ENCODE measurements at regions of chr13 and their contacts with region 1.

Region 1: DNA sequence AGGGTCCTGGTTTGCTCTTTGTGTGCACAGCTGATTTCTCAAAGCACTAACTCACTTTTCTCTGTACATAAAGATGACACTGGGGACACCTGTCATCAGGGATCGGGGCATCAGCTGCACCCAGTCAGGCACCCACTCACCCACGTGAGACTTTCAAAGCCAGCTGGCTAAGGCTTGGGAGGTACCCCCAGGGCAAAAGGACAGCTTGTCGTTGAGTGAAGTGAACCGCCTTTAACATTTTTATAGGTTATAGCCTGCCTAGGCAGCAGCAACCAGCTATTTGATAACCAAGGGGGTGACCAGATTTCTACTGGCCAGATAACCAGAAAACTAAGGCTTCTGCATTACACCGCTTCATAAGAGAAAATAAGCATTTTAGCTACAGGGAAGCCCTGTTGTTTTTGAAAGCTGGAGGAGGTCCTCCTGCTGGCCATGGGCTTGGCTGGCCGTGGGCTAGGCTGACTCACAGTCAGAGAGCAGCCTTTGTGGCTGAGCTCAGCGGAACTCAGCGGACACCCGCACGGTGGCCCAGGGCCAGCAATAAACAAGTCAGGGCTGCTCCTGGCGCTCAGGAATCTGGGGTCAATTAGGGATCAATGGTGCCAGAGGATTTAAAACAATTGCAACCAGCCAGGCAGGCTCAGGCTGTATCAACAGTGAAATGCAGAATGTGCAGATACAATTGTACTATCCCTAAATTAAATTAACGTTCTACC is 57.1 kb downstream of the ALOX5AP start:
- DNase-seq: peak; percentile 56
- H3K4me3 ChIP-seq: peak overlapping the region in 2 of 3 experiments; percentile 30 to 41
- H3K27ac ChIP-seq: no peak overlapping the region
- H3K4me1 ChIP-seq: peaks cover 36% of the 10 kb centered on the region
- H3K27me3 ChIP-seq: no peaks in the 10 kb centered on the region
- CTCF ChIP-seq: peak in 2 of 3 experiments; percentile 11 to 36

Region 2: DNA sequence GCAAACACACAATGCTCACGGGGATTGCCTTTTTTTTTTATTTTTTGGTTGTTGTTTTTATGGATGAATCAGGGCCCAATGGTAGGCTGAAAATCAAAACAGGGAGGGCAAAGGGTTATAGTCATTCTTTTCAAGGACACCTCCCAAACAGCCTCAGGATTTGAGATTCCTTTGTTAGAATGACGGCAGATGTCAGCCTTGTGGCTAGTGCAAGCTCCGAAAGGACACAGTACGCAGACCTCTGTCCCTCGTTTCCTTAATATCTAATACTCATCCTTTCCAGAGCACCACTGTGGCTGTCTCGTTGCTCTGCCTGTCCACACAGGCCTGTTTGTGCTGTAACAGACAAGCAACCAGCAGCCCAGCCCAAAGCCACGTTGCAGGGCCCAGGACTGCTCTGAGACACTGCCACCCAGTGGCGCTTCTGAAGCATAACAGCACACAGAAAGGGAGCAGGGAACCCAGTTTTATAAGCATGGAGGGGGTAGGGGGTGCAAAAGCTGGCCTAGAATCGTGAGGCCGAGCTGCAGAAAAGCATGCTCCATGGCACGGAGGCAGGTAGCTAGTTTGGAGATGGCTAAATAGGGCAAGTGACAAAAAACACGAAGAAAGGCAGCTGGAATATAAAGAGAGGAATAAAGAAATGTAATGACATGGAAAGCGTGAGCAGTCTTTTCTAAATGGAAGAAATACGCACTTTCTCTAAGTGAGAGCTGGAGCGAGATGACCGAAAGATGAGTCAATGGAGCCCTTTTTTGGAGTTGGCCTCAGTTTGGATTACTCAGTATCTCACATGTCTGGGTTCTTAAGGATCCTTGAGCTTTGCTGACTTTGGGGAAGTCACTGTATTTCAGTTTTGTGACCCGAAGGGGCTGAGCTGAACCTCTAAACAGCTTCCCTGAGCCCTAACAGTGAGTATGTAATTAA is 72.9 kb after region 1 on chr13:
- dilution Hi-C with region 1: loop called (anchors 10 kb)
- DNase-seq: peak; percentile 80
- H3K4me3 ChIP-seq: peak overlapping the region in 2 of 3 experiments; percentile 13 to 28
- H3K27ac ChIP-seq: peak overlapping the region; percentile 87
- H3K4me1 ChIP-seq: peaks cover 25% of the 10 kb centered on the region
- H3K27me3 ChIP-seq: no peaks in the 10 kb centered on the region
- CTCF ChIP-seq: peak; percentile 94 to 99 (median 95)

Measured in keratinocyte (primary cell).